Heart right ventricle (tissue), 16 donors: ENCODE measurements at regions of chr1 and their contacts with region 1.

Region 1: DNA sequence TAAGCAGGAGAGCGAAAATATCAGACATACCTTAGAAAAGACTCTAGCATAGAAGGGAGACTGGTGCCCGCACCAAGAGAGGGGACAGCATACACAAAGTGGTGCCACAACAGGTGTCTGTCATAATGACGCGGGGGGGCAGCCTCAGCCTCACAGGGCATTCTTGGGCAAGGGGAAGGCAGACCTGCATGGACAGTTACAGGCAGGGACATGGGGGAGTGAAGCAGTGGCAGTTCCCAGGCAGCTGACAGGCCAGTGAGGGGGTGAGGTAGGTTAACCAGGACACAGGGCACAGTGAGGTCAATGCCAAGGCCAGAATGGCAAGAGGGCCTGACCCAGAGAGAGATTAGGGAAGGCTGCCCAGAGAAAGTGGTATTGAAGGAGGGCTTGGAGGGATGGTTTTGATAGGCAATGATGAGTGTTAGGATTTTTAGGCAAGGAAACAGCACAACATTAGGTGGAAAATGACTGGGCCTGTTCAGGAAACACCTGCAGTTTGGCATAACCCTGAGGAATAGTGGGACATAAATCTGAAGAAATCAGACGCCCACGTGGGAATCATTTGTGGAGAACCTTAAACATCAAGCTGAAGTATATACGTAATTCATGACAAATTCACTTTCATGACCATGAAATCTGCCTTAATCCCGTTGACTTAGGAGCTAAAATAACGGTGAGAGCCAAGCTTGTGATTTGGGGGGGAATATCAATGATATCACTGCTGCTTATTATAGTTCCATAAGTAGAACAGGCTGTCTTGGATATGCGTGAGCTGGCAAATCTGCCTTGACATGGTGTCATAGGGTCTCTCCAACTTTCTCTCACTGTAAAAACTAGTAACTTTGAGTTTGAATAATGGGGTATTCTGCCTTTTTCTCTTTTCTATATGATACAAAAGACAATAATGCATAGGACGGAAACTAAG is 8.9 kb downstream of the PTPN14 start:
- DNase-seq: no peak
- ATAC-seq: peak in 6 of 8 donors; percentile 14 to 73 (median 54)
- H3K4me3 ChIP-seq: no peak overlapping the region
- H3K27ac ChIP-seq: peak overlapping the region in 3 of 10 donors; percentile 49 to 59 (median 59)
- H3K4me1 ChIP-seq: peaks cover 4 to 86% (median 62%) of the 10 kb centered on the region in 9 donors
- H3K27me3 ChIP-seq: no peaks in the 10 kb centered on the region
- CTCF ChIP-seq: no peak

Region 2: GRCh38 chr1:214192825-214193643 is 349.5 kb before region 1 on chr1:
- intact Hi-C with region 1: no loop called
- DNase-seq: no peak
- ATAC-seq: peak in 1 of 8 donors; percentile 33
- H3K4me3 ChIP-seq: no peak overlapping the region
- H3K27ac ChIP-seq: no peak overlapping the region
- H3K4me1 ChIP-seq: no peaks in the 10 kb centered on the region
- H3K27me3 ChIP-seq: peaks cover 0 to 61% (median 39%) of the 10 kb centered on the region in 7 donors
- CTCF ChIP-seq: no peak

Region 3: GRCh38 chr1:214500340-214501055 is 42.0 kb before region 1 on chr1:
- intact Hi-C with region 1: loop called in 1 of 10 experiments (anchors 5 kb)
- DNase-seq: no peak
- ATAC-seq: no peak
- H3K4me3 ChIP-seq: no peak overlapping the region
- H3K27ac ChIP-seq: no peak overlapping the region
- H3K4me1 ChIP-seq: peaks cover 0 to 58% (median 32%) of the 10 kb centered on the region in 9 donors
- H3K27me3 ChIP-seq: no peaks in the 10 kb centered on the region
- CTCF ChIP-seq: no peak